ENCODE measurements at regions of chr11 and their contacts with region 1.

Region 1: GRCh38 chr11:77091146-77091940 is 11.3 kb upstream of the OMP start:
- DNase-seq: peak; percentile 43 to 62
- ATAC-seq: peak; percentile 89 to 92
- H3K4me3 ChIP-seq: no peak overlapping the region
- H3K27ac ChIP-seq: no peak overlapping the region
- H3K4me1 ChIP-seq: no peaks in the 10 kb centered on the region
- H3K27me3 ChIP-seq: no peaks in the 10 kb centered on the region
- CTCF ChIP-seq: peak; percentile 83 to 91 (median 87)
- POLR2A ChIP-seq: no peak

Region 2: GRCh38 chr11:77053217-77054015 is 37.9 kb before region 1 on chr11:
- in situ Hi-C with region 1: loop called (anchors 5 to 10 kb)
- intact Hi-C with region 1: no loop called
- DNase-seq: no peak
- ATAC-seq: no peak
- H3K4me3 ChIP-seq: no peak overlapping the region
- H3K27ac ChIP-seq: no peak overlapping the region
- H3K4me1 ChIP-seq: no peaks in the 10 kb centered on the region
- H3K27me3 ChIP-seq: no peaks in the 10 kb centered on the region
- CTCF ChIP-seq: no peak
- POLR2A ChIP-seq: no peak